ENCODE measurements at regions of chr4 and their contacts with region 1.

Region 1: DNA sequence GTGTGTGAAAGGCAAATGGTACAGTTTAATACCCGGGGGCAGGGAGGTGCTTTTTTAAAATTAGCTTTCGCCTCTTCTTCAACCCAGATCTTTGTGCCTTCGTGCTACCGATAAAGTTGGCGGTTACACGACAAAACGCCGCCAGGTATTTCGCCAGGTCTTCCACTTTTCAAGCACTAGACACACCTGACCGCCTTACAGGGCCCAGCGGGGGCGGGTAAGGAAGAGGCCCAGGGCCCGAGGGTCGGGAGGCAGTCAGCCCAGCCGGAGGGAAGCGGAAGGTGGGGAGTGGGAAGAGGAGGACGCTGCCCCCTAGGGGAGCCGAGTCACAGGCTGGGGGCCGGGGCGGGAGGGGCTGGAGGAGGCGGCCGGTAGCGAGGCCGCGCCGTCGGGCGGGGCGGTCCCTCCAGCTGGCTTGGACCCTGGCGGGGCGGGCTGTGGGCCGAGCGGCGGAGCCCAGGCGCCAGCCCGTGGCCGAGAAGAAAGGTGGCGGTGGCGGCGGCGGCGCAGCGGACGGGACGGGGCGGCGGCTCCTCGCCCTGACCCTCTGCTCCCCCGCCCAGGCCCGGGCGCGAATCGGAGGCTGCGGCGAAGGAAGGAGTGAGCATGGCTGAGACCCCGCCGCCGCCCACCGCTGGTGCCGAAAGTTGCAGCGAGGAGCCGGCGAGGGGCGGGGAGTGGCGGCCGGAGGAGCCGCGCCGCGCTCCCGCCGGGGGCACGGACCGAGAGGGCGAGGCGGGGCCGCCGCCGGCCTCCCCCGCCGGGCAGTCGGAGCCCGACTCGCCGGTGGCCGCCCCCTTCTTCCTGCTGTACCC is 16.2 kb downstream of the UTP3 start:
- DNase-seq: peak; percentile 75

Region 2: DNA sequence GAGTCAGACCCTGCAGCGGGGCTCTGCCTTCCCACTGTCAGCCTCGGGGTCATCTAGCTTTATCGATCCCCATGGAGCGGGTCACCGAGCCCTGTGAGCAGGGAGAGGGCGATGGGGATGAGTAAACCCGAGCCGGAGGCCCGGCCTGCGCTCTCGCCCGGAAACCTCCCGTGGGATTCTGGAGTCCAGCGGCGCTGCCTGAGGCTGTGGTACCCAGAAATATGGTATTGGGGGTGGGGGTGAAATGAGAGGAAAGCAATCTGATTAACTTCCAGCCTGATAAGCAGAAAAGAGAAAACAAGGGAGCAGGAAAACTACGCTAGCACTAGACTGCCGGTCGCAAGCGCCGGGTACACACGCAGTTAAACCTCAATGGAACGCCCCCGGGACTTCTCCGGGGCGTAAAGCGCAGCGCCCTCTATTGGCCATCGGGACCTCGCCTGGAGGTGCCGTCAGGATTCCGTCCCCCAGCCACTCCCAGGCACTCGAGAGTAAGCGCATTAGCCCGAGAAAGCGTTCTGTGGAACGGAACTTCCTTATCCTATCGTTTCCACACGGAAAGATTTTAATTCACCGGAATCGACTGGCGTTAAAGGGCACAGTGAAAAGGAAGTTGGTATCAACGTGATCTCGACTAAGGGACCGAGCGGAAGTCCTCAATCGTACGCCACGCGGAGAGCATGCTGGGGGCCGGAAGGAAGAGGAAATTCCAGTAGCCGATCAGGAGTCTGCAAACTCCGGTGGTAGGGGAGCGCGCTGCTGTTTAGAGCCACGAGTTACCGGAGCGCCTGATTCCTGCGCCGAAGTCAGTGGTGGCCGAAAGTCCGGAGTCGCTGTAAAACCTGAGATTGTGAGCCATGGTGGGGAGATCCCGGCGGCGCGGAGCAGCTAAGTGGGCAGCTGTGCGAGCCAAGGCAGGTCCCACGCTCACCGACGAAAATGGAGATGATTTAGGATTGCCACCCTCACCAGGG is 16.4 kb before region 1 on chr4 and contains the start of gene UTP3:
- CTCF ChIA-PET with region 1: interaction called, 4 read pairs
- POLR2A ChIA-PET with region 1: interaction called, 11 read pairs
- DNase-seq: peak; percentile 88

Region 3: DNA sequence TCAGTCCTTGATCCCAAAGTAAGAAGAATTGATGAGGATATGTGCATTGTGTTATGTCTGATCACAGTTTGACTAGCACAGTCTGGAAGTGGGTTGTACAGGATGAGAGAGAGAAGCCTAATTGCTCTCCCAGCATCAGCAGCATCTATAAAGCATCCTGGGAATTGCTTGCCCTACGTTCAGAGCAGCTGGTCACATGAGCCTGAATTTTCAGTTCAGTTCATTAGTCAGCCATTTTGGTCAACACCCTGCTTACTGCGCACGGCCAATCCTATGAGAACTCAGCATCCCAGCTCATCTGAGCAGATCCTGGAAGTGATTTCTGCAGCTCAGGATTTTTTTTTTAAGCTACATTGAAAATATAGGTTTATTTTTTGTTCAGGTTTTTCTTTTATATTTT is 17.2 kb after region 1 on chr4 and contains the start of gene RUFY3:
- CTCF ChIA-PET with region 1: no interaction called
- POLR2A ChIA-PET with region 1: interaction called, 19 read pairs
- DNase-seq: peak; percentile 75

Region 4: DNA sequence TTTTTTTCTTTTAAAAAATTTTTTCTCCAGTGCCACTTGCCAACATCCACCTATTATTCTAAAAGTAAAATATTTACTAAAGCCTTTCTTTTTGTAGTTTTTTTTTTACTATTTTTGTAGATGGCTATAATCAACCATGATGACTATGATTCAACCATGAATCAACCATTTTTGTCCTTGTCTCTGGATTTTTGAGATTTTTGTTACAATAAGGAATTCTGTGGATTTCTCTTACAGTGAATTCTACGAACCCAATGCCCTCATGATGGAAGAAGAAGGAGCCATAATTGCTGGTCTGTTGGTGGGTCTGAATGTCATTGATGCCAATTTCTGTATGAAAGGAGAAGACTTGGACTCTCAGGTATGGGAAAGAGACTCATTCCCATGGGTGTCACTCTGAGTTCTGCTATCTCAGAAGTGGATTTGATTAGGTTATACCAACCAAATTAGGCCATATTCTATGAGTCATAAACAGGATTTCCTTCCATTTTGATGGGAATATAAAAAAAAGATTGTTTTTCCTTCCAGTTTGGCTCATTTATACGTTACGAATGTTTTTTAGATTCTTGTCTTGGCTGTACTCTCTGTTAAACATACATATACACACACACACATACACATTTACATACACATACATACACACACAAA is 63.9 kb after region 1 on chr4:
- CTCF ChIA-PET with region 1: no interaction called
- POLR2A ChIA-PET with region 1: no interaction called
- DNase-seq: no peak